ENCODE measurements at regions of chr1 and their contacts with region 1.

Region 1: GRCh38 chr1:199422198-199422597 is 605.3 kb upstream of the NR5A2 start:
- DNase-seq: peak; percentile 53
- H3K4me3 ChIP-seq: no peak overlapping the region
- H3K27ac ChIP-seq: no peak overlapping the region
- H3K4me1 ChIP-seq: no peaks in the 10 kb centered on the region
- H3K27me3 ChIP-seq: no peaks in the 10 kb centered on the region
- CTCF ChIP-seq: peak in 1 of 2 donors; percentile 47
- POLR2A ChIP-seq: no peak

Region 2: GRCh38 chr1:198756470-198756869 is 665.7 kb before region 1 on chr1:
- CTCF ChIA-PET with region 1: interaction called, 18 read pairs
- POLR2A ChIA-PET with region 1: no interaction called
- dilution Hi-C with region 1: no loop called
- intact Hi-C with region 1: loop called (anchors 5 kb)
- DNase-seq: peak; percentile 27
- H3K4me3 ChIP-seq: no peak overlapping the region
- H3K27ac ChIP-seq: no peak overlapping the region
- H3K4me1 ChIP-seq: no peaks in the 10 kb centered on the region
- H3K27me3 ChIP-seq: no peaks in the 10 kb centered on the region
- CTCF ChIP-seq: no peak
- POLR2A ChIP-seq: no peak

Region 3: DNA sequence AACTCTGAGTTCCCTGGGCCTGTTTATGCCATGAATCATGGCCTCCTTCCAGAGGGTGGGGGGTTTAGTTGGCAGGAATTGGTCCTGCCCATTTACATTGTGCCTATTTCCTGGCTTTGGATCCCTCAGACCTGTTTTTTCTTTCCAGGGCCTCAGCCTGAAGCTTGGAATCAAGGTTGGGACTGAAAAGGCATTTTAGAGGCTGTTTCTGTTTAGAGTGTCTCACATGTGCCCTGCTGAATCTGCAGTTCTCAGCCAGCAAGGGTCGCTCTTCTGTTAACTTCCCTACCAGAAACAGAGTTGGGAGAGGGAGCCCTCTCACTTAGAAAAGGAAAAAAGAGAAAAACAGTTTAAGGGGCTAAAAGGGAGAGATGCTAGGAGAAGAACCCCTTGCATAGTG is 592.3 kb before region 1 on chr1:
- CTCF ChIA-PET with region 1: interaction called, 3 read pairs
- POLR2A ChIA-PET with region 1: no interaction called
- dilution Hi-C with region 1: no loop called
- intact Hi-C with region 1: loop called (anchors 5 kb)
- DNase-seq: peak; percentile 66
- H3K4me3 ChIP-seq: no peak overlapping the region
- H3K27ac ChIP-seq: no peak overlapping the region
- H3K4me1 ChIP-seq: peaks cover 13% of the 10 kb centered on the region
- H3K27me3 ChIP-seq: no peaks in the 10 kb centered on the region
- CTCF ChIP-seq: peak in 1 of 2 donors; percentile 25
- POLR2A ChIP-seq: no peak

Region 4: GRCh38 chr1:199403531-199404116 is 18.6 kb before region 1 on chr1:
- CTCF ChIA-PET with region 1: interaction called, 13 read pairs
- POLR2A ChIA-PET with region 1: no interaction called
- dilution Hi-C with region 1: no loop called
- intact Hi-C with region 1: no loop called
- DNase-seq: no peak
- H3K4me3 ChIP-seq: no peak overlapping the region
- H3K27ac ChIP-seq: no peak overlapping the region
- H3K4me1 ChIP-seq: no peaks in the 10 kb centered on the region
- H3K27me3 ChIP-seq: peaks cover 0 to 5% of the 10 kb centered on the region in 2 experiments
- CTCF ChIP-seq: no peak
- POLR2A ChIP-seq: no peak